ENCODE measurements at regions of chr1 and their contacts with region 1.

Region 1: GRCh38 chr1:229258031-229258756 is 12.7 kb upstream of the RAB4A start:
- DNase-seq: peak in 8 of 10 donors; percentile 55 to 80 (median 70)
- H3K4me3 ChIP-seq: peak overlapping the region in 3 of 59 donors; percentile 11 to 21 (median 13)
- H3K27ac ChIP-seq: peak overlapping the region in 55 of 59 donors; percentile 6 to 89 (median 72)
- H3K27me3 ChIP-seq: no peaks in the 10 kb centered on the region
- CTCF ChIP-seq: peak; percentile 69 to 99 (median 93)

Region 2: GRCh38 chr1:229156872-229157271 is 101.3 kb before region 1 on chr1:
- intact Hi-C with region 1: no loop called
- DNase-seq: no peak
- H3K4me3 ChIP-seq: no peak overlapping the region
- H3K27ac ChIP-seq: peak overlapping the region in 2 of 59 donors; percentile 13 to 36
- H3K27me3 ChIP-seq: no peaks in the 10 kb centered on the region
- CTCF ChIP-seq: peak in 49 of 56 donors; percentile 17 to 74 (median 43)

Region 3: GRCh38 chr1:229479660-229480399 is 221.6 kb after region 1 on chr1:
- intact Hi-C with region 1: loop called (anchors 2 kb)
- DNase-seq: no peak
- H3K4me3 ChIP-seq: peak overlapping the region in 2 of 59 donors; percentile 15 to 32
- H3K27ac ChIP-seq: peak overlapping the region in 57 of 59 donors; percentile 19 to 89 (median 80)
- H3K27me3 ChIP-seq: no peaks in the 10 kb centered on the region
- CTCF ChIP-seq: no peak

Region 4: GRCh38 chr1:229514578-229515275 is 256.5 kb after region 1 on chr1:
- intact Hi-C with region 1: loop called in 1 of 2 experiments (anchors 1 kb)
- DNase-seq: peak; percentile 41 to 85 (median 70)
- H3K4me3 ChIP-seq: peak overlapping the region in 3 of 59 donors; percentile 6 to 22 (median 19)
- H3K27ac ChIP-seq: peak overlapping the region in 6 of 59 donors; percentile 2 to 46 (median 19)
- H3K27me3 ChIP-seq: no peaks in the 10 kb centered on the region
- CTCF ChIP-seq: peak; percentile 56 to 90 (median 82)

Measured in dorsolateral prefrontal cortex (tissue), 120 donors.